ENCODE measurements at regions of chr2 and their contacts with region 1.

Region 1: DNA sequence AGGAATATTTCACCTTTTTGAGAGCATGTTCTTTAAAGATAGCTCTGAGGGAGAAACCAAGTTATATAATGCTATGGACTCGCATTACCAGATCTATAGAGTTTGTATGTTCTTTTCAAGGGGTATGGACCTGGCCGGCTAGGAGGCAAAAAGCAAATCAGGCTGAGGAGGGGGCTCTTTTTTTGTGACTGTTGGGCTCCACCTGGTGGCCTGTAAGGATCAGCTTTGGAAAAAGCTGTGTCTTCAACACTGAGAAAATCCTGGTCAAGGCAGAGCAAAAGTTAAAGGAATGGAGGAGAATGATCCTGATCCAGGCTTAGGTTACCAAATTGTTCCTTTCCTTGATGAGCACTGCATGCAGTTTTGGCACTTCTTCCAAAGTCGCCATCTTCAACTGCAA is 180.5 kb downstream of the DIS3L2 start:
- DNase-seq: peak; percentile 13 to 40
- ATAC-seq: peak; percentile 74 to 89
- H3K4me3 ChIP-seq: no peak overlapping the region
- H3K27ac ChIP-seq: no peak overlapping the region
- H3K4me1 ChIP-seq: no peaks in the 10 kb centered on the region
- CTCF ChIP-seq: peak; percentile 90
- EP300 ChIP-seq: no peak
- POLR2A ChIP-seq: no peak
- RAD21 ChIP-seq: peak; percentile 74 to 82

Region 2: DNA sequence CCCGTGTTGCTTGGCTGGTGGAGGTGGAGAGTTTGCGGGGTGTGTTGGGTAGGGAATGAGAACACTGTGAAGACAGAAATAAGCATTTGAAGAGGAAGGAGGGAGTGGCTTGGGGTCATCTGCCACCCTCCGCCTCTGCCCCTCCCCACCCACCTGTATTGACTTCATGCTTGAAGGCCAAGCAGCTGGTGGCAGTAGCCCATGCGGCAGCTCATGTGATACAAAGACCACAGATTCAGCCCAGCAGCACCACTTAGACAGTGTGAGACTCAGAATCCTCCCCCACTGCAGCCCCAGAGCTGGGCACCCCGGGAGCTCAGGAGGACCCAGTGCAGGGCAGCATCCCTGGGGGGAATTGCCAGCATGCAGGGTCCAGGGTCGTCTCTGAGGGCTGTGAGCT is 231.3 kb before region 1 on chr2:
- CTCF ChIA-PET with region 1: interaction called, 13 read pairs
- POLR2A ChIA-PET with region 1: no interaction called
- DNase-seq: no peak
- ATAC-seq: no peak
- H3K4me3 ChIP-seq: no peak overlapping the region
- H3K27ac ChIP-seq: no peak overlapping the region
- H3K4me1 ChIP-seq: peaks cover 3% of the 10 kb centered on the region; the same call in 1 of the 3 replicates
- CTCF ChIP-seq: no peak
- EP300 ChIP-seq: no peak
- POLR2A ChIP-seq: no peak
- RAD21 ChIP-seq: no peak

Region 3: GRCh38 chr2:232126301-232127099 is 15.5 kb before region 1 on chr2:
- CTCF ChIA-PET with region 1: interaction called, 19 read pairs
- POLR2A ChIA-PET with region 1: no interaction called
- DNase-seq: no peak
- ATAC-seq: no peak
- H3K4me3 ChIP-seq: no peak overlapping the region
- H3K27ac ChIP-seq: no peak overlapping the region
- H3K4me1 ChIP-seq: no peaks in the 10 kb centered on the region
- CTCF ChIP-seq: no peak
- EP300 ChIP-seq: no peak
- POLR2A ChIP-seq: no peak
- RAD21 ChIP-seq: no peak

Measured in A549 (cell line).